ENCODE measurements at regions of chr13 and their contacts with region 1.

Region 1: DNA sequence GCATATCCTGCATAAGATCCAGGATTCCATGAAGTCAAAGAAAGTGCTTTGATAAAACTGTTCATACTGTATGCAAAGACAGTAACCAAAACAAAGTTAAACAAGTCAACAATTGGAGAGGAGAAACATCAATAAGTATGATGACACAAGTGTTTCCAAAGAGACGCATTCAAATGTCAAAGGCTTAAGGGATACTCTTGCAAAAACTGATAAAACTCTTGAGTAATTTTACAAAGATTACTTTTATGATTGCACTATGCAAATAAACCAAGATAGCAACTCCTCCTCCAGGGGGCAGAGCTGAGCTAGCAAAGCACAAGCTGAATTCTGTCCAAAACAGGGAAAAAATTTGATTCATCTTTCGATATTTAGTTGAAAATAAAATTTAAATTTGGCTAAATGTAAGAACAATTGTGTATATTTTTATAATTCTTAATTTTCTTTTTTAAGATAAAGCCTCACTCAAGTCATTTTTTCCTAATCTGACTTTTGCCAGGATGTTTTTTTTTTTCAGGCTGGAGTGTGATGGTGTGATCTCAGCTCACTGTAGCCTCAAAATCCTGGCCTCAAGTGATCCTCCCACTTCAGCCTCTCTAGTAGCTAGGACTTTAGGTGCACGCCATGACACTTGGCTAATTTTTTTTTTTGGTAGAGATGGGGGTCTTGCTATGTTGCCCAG is 84.0 kb downstream of the MZT1 start:
- DNase-seq: peak; percentile 41
- ATAC-seq: peak; percentile 72
- H3K4me3 ChIP-seq: no peak overlapping the region
- H3K27ac ChIP-seq: no peak overlapping the region
- H3K4me1 ChIP-seq: no peaks in the 10 kb centered on the region
- H3K27me3 ChIP-seq: no peaks in the 10 kb centered on the region; a peak in 1 of 5 replicates
- CTCF ChIP-seq: peak; percentile 26; the same call in 1 of the 2 replicates
- EP300 ChIP-seq: no peak
- POLR2A ChIP-seq: no peak
- RAD21 ChIP-seq: no peak

Region 2: GRCh38 chr13:72657379-72657778 is 13.9 kb after region 1 on chr13:
- CTCF ChIA-PET with region 1: no interaction called
- POLR2A ChIA-PET with region 1: no interaction called
- in situ Hi-C with region 1: no loop called
- intact Hi-C with region 1: no loop called
- DNase-seq: no peak
- ATAC-seq: no peak
- H3K4me3 ChIP-seq: no peak overlapping the region
- H3K27ac ChIP-seq: no peak overlapping the region
- H3K4me1 ChIP-seq: no peaks in the 10 kb centered on the region
- H3K27me3 ChIP-seq: no peaks in the 10 kb centered on the region
- CTCF ChIP-seq: no peak
- EP300 ChIP-seq: no peak
- POLR2A ChIP-seq: no peak
- RAD21 ChIP-seq: no peak

Region 3: DNA sequence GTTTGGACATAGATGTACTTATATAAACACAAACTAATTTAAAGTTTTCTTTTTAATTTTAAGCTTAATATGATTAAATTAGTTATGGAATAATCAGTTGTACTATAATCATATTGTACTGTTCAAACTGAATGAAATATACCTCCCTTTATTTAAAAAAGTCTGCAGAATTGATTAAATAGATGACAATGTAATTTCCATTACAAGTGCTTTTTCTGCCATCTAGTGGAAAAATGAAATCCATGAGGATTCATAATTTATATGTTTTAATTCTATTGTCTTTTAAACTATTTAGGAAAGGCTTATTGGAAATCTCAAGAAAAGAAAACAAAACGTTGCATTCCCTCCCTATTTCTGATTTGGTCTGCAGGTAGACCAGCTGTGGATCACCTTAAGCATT is 53.1 kb after region 1 on chr13:
- CTCF ChIA-PET with region 1: no interaction called
- POLR2A ChIA-PET with region 1: no interaction called
- in situ Hi-C with region 1: no loop called
- intact Hi-C with region 1: loop called (anchors 5 kb)
- DNase-seq: no peak
- ATAC-seq: no peak
- H3K4me3 ChIP-seq: no peak overlapping the region
- H3K27ac ChIP-seq: no peak overlapping the region
- H3K4me1 ChIP-seq: no peaks in the 10 kb centered on the region
- H3K27me3 ChIP-seq: no peaks in the 10 kb centered on the region; a peak in 2 of 5 replicates
- CTCF ChIP-seq: no peak
- EP300 ChIP-seq: no peak
- POLR2A ChIP-seq: no peak
- RAD21 ChIP-seq: no peak